ENCODE measurements at regions of chr19 and their contacts with region 1.

Region 1: DNA sequence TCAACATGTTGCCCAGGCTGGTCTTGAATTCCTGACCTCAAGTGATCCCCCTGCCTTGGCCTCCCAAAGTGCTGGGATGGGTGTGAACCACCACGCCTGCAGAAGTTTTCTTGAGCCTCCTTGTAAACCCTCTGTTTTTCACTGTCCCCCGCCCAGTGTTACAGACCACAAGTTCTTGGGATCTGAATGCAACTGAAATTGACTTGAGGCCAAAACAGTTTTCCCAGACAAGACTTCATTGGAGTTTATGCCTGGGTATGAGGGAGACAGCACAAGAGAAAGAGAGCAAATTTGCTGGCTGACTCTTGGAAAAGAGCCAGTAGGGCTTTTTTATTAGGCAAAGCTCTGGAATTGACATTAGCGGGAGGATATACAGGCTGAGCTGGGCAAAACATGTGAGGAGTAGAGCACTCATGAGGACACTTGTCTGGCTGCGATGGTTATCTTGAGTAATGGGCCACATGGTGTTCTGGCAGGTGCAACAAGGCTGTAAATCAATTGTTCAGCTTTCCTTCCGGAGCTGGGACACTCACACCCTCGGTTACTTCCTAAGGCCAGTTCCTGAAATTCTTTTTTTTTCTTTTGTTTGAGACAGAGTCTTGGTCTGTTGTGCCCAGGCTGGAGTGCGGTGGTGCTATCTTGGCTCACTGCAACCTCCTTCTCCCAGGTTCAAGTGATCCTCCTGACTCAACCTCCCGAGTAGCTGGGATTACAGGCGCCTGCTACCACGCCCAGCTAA is 12.7 kb upstream of the HNRNPL start:
- DNase-seq: no peak
- H3K4me3 ChIP-seq: no peak overlapping the region
- H3K27ac ChIP-seq: peak overlapping the region; percentile 31
- H3K4me1 ChIP-seq: peaks cover 87% of the 10 kb centered on the region
- CTCF ChIP-seq: no peak

Region 2: GRCh38 chr19:38683393-38684080 is 179.0 kb before region 1 on chr19:
- CTCF ChIA-PET with region 1: interaction called, 10 read pairs
- POLR2A ChIA-PET with region 1: no interaction called
- intact Hi-C with region 1: no loop called
- DNase-seq: no peak
- H3K4me3 ChIP-seq: no peak overlapping the region
- H3K27ac ChIP-seq: no peak overlapping the region
- H3K4me1 ChIP-seq: peaks cover 12% of the 10 kb centered on the region
- CTCF ChIP-seq: no peak

Region 3: DNA sequence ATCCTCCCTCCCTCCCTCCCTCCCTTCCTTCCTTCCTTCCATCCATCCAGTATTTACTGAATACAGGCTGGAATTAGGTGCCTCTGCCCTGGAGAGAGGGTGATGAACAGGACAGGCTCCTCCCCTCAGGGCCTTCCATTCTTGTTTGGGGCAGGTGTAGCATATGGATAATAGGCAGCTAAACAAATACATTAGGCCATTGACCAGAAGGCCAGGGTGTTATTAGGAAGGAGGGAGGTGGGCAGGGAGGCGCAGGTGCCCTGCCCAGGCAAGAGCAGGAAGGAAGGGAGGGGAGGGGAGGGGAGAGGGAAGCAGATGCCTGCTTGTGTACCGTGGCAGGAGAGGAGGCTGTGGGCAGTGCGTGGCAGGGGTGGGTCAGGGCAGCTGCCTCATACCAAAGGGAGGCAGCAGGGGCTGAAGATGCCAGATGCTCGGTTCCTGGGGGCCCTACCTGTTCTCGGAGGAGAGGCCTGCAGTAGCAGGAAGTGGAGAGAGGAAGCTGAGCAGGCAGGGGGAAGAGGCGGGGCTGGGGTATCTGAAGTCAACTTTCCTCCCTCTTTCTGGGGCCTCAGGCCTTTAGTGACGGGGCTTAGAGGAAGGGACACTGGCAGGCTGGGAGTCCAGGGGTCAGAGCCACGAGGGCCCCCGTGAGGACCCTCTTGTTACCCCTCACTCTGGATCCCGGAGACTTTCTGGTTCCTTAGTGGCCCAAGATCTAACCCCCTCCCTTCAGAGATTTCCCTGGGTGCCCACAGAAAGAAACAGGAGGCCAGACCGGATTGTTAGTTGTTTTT is 15.5 kb after region 1 on chr19 and contains the start of gene RINL:
- CTCF ChIA-PET with region 1: no interaction called
- POLR2A ChIA-PET with region 1: interaction called, 10 read pairs
- intact Hi-C with region 1: no loop called
- DNase-seq: peak; percentile 87
- H3K4me3 ChIP-seq: peak within 1 kb of the TSS; percentile 65
- H3K27ac ChIP-seq: peak within 1 kb of the TSS; percentile 90
- H3K4me1 ChIP-seq: peaks cover 26% of the 10 kb centered on the region
- CTCF ChIP-seq: no peak
- total RNA-seq, gene RINL: 26.3 and 33.3 TPM in 2 replicates

Measured in OCI-LY7 (cell line).